Aorta (tissue), 5 donors: ENCODE measurements at regions of chr5 and their contacts with region 1.

Region 1: GRCh38 chr5:6377905-6378765 is at the start of gene MED10:
- DNase-seq: peak; percentile 97 to 99
- ATAC-seq: peak; percentile 99
- H3K4me3 ChIP-seq: peak within 1 kb of the TSS; percentile 54 to 90
- H3K27ac ChIP-seq: peak within 1 kb of the TSS; percentile 74 to 86
- H3K4me1 ChIP-seq: peaks cover 1 to 6% of the 10 kb centered on the region in 2 donors
- H3K27me3 ChIP-seq: no peaks in the 10 kb centered on the region
- total RNA-seq, gene MED10: 29.0 to 33.6 TPM

Region 2: GRCh38 chr5:6424110-6424659 is 46.0 kb after region 1 on chr5:
- intact Hi-C with region 1: loop called in 1 of 2 experiments (anchors 5 kb)
- DNase-seq: no peak
- ATAC-seq: no peak
- H3K4me3 ChIP-seq: no peak overlapping the region
- H3K27ac ChIP-seq: no peak overlapping the region
- H3K4me1 ChIP-seq: no peaks in the 10 kb centered on the region
- H3K27me3 ChIP-seq: no peaks in the 10 kb centered on the region

Region 3: DNA sequence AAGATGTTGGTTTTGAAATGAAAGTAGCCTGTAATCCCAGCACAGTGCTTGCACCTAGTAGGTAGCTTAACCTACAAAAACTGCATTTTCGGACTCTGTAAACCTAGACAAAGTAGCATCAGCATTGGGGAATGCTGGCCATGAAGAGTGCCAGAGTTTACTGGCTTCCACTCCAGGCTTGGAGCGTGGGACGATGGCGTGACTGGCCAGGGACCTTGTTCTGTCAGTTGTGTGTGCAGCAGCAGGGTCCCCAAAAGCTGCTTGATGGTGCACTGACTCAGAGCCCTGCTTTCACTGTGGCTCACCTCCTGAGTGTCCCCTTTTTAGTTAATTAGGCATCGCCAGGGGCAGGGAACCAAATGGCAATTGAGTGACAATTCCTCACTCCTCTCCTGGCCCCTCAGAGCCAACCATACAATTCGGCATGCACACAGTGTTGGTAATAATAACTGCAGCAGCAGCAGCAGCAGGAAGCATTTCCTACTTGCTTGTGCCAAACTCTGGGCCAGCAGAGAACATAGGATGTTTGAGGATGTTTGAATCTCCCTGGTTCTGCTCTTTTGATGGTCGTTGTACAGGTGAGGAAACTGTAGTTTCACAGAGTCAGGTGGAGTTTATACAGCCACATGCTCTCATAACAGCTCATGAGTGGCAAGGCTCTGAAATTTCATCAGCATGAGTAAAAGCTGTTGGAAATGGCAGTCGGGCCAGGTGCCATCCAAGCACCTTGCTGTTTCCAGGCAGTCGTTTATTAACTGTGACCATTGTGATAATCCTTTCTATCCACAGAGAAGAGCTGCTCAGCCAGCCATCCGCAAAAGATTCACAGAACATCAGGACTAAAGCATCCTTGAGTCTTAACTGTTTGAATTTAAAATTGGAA is 74.7 kb after region 1 on chr5:
- intact Hi-C with region 1: loop called in 1 of 2 experiments (anchors 5 kb)
- DNase-seq: no peak
- ATAC-seq: no peak
- H3K4me3 ChIP-seq: peak overlapping the region in 1 of 2 donors; percentile 16
- H3K27ac ChIP-seq: peak overlapping the region in 1 of 2 donors; percentile 32
- H3K4me1 ChIP-seq: no peaks in the 10 kb centered on the region
- H3K27me3 ChIP-seq: no peaks in the 10 kb centered on the region

Region 4: GRCh38 chr5:6576861-6577501 is 198.8 kb after region 1 on chr5:
- intact Hi-C with region 1: loop called (anchors 5 kb)
- DNase-seq: no peak
- ATAC-seq: peak; percentile 15
- H3K4me3 ChIP-seq: no peak overlapping the region
- H3K27ac ChIP-seq: no peak overlapping the region
- H3K4me1 ChIP-seq: no peaks in the 10 kb centered on the region
- H3K27me3 ChIP-seq: no peaks in the 10 kb centered on the region

Region 5: DNA sequence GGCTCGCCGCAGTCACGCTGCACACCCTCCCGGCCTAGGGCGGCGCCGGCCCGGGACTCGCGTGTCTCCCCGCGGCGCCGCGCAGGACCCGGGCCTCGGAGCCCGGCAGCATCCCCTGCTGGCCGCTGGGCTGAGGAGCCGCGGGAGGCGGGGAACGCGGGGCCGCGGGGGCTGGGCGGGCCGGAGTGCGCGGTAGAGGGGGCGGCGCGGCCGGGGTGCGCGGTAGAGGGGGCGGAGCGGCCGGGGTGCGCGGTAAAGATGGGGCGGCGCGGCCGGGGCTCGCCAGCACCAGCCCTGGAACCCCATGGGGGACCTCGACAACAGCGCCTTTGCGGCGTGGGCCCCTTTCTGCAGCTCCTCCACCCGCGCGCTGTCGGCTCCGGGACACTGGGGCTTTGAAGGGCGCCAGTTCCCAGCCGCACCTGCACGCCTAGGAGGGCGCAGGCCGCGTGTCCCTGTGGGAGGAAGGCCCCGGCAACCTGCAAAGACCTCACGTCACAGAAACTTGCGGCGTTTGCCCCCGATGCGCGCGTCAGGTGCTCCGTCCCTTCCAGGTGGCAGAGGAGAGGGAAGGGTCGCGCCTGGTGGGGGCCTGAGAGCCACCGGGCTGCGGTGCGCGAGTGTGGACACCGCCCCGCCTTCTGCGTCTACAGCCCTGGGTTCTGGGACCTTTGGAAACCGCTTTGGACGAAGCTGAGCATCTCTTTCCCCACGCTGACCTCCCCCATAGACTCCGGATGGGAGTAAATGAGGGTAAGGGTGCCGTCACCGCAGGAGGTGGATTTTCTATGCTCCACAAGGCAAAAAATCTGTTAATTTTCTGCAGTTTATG is 205.1 kb after region 1 on chr5:
- intact Hi-C with region 1: loop called (anchors 5 kb)
- DNase-seq: peak in 1 of 2 donors; percentile 86
- ATAC-seq: peak; percentile 85
- H3K4me3 ChIP-seq: peak overlapping the region; percentile 19 to 32
- H3K27ac ChIP-seq: no peak overlapping the region
- H3K4me1 ChIP-seq: peaks cover 0 to 4% of the 10 kb centered on the region in 2 donors
- H3K27me3 ChIP-seq: no peaks in the 10 kb centered on the region

Region 6: DNA sequence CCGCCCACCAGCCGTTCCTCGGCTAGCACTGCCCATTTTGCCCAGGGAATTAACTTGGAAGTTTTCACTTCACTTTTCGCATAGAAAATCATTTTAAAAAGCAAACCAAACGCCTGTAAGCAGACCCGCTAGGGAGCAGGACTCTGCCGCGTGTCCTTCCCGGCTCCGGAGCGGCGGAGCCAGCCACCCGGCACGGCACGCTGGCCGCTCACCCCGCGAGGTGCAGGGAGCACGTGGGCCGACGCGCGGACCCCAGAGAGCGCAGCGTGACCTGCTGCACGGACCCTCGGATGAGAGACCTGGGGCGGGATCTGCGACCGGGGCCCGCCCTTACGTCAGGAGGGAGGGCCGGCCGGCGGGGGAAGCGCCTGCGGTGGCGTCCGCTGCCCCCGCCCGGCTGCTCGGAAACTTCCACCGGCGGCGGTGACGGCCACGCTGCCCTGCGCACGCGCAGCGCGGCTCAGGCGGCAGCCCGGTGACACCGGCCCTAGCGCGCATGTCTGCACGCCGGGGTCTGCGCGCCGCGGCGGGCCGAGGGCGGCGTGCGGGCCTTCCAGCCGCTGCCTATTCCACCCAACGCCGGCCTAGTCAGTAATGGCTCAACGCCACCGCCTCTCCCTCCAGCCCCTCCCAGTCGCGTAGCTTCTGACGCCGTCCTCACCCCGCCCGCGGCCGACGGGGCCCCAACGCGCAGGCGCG is 334.6 kb after region 1 on chr5:
- intact Hi-C with region 1: loop called in 1 of 2 experiments (anchors 10 kb)
- DNase-seq: peak; percentile 98 to 99
- ATAC-seq: peak; percentile 95
- H3K4me3 ChIP-seq: peak overlapping the region; percentile 56 to 62
- H3K27ac ChIP-seq: peak overlapping the region; percentile 51 to 81
- H3K4me1 ChIP-seq: peaks cover 4 to 7% of the 10 kb centered on the region in 2 donors
- H3K27me3 ChIP-seq: no peaks in the 10 kb centered on the region